CD8-positive, alpha-beta memory T cell (primary cell): ENCODE measurements at regions of chr14 and their contacts with region 1.

Region 1: DNA sequence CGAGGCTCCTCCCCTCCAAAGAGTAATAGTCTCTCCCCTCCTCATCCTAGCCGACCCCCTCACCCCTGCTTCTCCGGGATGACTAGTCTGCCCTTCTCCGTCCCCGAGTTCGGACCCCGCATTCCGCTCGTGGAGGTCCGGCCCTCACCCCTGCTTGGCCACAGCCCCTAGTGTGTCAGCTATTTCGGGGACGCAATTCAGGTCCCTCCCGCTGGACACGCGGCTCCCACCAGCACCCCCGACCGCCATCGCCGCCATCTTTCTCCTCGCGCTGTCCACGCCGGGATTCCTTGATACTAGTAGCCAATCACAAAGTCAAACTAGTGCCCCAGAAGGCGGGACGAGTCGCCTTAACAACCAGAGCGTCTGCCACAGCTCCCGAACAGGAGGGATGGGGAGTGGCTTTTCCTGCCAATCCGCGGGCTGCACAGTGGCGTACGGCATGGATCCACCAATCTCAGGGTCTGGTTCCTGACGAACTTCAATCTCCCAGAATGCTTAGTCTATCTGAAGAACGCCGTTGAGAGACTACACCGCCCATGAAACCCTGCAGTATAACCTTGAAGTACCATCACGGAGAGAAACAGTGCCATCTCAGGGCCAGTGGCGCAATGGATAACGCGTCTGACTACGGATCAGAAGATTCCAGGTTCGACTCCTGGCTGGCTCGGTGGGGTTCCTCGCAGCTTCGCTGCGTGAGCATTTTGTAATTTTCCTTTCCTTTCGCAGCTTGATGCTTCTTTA is at the start of gene PRMT5:
- DNase-seq: peak; percentile 95 to 99 (median 97)
- H3K4me3 ChIP-seq: peak within 1 kb of the TSS; percentile 92
- H3K4me3 Mint-ChIP-seq: no peak within 1 kb of the TSS
- H3K27ac ChIP-seq: peak within 1 kb of the TSS; percentile 87
- H3K27ac Mint-ChIP-seq: peak within 1 kb of the TSS in 1 of 8 donors; percentile 16
- H3K4me1 ChIP-seq: peaks cover 18% of the 10 kb centered on the region
- H3K4me1 Mint-ChIP-seq: peaks cover 8 to 21% (median 16%) of the 10 kb centered on the region in 3 donors
- H3K27me3 ChIP-seq: no peaks in the 10 kb centered on the region
- H3K27me3 Mint-ChIP-seq: no peaks in the 10 kb centered on the region
- total RNA-seq, gene PRMT5: 191 to 200 TPM

Region 2: DNA sequence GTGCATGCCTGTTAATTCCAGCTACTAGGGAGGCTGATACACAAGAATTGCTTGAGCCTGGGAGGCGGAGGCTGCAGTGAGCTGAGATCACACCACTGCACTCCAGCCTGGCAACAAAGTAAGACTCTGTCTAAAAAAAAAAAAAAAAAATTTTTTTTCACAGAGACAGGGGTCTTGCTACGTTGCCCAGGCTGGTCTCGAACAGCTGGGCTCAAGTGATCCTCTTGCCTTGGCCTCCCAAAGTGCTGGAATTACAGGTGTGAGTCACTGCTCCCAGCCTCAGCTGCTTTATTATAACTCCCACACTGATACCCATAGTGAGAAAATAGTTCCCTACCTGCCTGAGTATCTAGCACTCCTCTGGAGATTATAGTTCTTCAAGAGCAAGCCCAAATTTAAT is 16.4 kb after region 1 on chr14:
- CTCF ChIA-PET with region 1: interaction called, 20 read pairs
- POLR2A ChIA-PET with region 1: interaction called, 4 read pairs
- DNase-seq: no peak
- H3K4me3 ChIP-seq: no peak overlapping the region
- H3K4me3 Mint-ChIP-seq: no peak overlapping the region
- H3K27ac ChIP-seq: no peak overlapping the region
- H3K27ac Mint-ChIP-seq: no peak overlapping the region
- H3K4me1 ChIP-seq: no peaks in the 10 kb centered on the region
- H3K4me1 Mint-ChIP-seq: no peaks in the 10 kb centered on the region
- H3K27me3 ChIP-seq: no peaks in the 10 kb centered on the region
- H3K27me3 Mint-ChIP-seq: no peaks in the 10 kb centered on the region

Region 3: DNA sequence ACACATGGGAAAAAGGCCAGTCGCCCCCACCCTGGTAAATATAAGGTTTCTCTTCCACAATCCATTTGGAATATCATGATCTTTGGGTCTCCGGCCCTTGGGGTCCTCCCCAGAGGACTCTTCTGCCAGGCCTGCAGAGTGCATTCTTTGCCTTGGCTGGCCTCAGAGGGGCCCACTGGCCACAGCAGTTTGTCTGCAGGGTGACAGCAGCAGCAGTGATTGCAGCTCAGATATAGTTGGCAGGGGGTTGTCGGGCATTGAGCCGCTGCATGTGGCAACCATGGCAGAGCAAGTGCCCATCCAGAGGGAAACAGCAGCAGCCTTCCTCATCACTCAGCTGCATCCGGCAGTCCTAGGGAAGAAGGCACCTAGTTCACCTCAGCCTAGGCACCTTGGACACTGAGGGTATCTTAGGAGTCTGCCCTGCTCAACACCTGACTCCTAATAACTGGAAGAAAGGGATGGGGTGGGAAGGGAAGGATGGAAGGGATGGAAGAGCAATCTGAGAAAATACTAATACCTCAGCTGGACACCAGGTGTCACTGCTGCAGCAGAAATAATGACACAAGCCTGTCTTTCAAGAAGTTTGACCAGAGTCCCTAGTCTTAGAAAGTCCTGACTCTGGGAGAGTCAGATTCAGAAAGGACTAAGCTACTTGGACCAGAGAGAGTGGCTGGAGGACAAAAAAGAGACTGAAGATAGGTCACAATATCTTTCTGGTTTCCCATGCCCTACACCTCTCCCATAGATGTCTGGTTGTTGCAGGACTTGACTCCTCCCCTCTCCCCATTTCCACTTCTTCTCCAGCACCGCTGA is 44.1 kb after region 1 on chr14:
- CTCF ChIA-PET with region 1: interaction called, 14 read pairs
- POLR2A ChIA-PET with region 1: no interaction called
- DNase-seq: peak in 3 of 5 donors; percentile 27 to 53 (median 34)
- H3K4me3 ChIP-seq: no peak overlapping the region
- H3K4me3 Mint-ChIP-seq: peak overlapping the region in 1 of 7 donors; percentile 32
- H3K27ac ChIP-seq: no peak overlapping the region
- H3K27ac Mint-ChIP-seq: peak overlapping the region in 1 of 8 donors; percentile 31
- H3K4me1 ChIP-seq: no peaks in the 10 kb centered on the region
- H3K4me1 Mint-ChIP-seq: no peaks in the 10 kb centered on the region
- H3K27me3 ChIP-seq: peaks cover 4% of the 10 kb centered on the region
- H3K27me3 Mint-ChIP-seq: peaks cover 3 to 9% of the 10 kb centered on the region in 2 donors

Region 4: DNA sequence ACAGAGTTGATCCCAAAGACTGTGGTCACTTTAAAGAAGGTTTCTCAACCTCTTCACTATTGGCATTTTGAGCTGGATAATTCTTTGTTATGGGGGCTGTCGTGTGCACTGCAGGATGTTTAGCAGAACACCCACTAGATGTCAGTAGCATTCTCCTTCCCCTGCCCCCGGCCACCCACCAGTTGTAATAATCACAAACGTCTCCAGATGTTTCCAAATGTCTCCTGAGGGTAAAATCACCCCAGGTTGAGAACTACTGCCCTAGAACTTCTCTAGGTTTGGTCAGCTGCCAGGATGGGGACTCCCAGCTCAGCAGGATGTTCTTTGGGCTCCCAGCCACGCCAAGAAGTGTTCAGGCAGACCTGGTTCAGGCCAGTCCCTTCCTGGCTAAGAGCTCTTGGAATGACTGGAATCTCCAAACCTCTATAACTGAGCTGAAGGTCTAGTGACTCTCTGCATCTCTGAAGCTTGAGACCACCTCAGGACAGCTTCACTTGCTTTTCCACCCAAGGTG is 65.5 kb after region 1 on chr14:
- CTCF ChIA-PET with region 1: interaction called, 10 read pairs
- POLR2A ChIA-PET with region 1: no interaction called
- DNase-seq: peak in 2 of 5 donors; percentile 39 to 51
- H3K4me3 ChIP-seq: no peak overlapping the region
- H3K4me3 Mint-ChIP-seq: no peak overlapping the region
- H3K27ac ChIP-seq: no peak overlapping the region
- H3K27ac Mint-ChIP-seq: peak overlapping the region in 1 of 8 donors; percentile 19
- H3K4me1 ChIP-seq: no peaks in the 10 kb centered on the region
- H3K4me1 Mint-ChIP-seq: peaks cover 0 to 5% (median 0%) of the 10 kb centered on the region in 3 donors
- H3K27me3 ChIP-seq: no peaks in the 10 kb centered on the region
- H3K27me3 Mint-ChIP-seq: no peaks in the 10 kb centered on the region

Region 5: DNA sequence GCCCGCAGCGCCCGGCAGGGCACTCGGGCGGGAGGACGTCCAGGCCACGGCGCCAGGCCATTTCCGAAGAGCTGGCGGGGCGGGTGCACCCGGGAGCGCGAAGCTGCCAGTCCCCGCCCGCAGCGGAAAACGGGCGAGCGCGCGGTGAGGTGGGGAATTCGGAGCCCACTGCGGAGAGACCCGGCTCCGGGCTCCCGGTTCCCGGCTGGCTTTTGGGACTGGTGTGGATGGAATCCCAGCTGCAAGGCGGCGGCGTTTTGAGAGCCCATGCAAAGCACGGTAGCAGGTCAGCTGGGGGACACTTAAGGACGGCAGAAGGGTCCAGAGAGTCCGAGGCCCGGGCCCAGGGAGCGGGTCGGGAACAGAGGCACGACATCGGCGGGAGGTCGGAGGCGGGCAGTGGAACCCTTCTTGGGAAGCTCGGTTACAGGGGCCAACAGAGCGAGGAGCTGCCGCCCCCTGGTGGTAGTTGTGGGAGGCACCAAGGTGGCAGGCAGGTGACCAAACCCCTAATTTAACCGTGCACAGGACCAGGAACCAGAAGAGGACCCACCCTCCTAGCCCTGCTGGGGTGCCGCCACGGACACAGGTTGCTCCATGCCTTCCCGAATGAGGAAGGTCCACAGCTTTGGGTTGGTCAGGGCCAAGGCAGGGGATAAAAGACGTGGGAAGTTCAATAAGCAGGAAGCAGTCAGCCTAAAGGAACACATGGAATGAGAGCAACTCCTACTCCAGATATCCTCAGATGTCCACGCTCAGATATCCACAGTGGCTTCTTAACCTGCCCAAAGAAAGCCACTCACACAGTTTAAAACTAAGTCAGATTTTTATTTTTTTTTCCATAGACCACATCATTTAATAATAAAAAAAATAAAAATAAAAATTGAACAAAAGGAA is 128.7 kb after region 1 on chr14:
- CTCF ChIA-PET with region 1: interaction called, 13 read pairs
- POLR2A ChIA-PET with region 1: no interaction called
- DNase-seq: peak; percentile 74 to 90 (median 81)
- H3K4me3 ChIP-seq: peak overlapping the region; percentile 74
- H3K4me3 Mint-ChIP-seq: peak overlapping the region; percentile 85 to 95 (median 90)
- H3K27ac ChIP-seq: no peak overlapping the region
- H3K27ac Mint-ChIP-seq: peak overlapping the region in 7 of 8 donors; percentile 37 to 92 (median 66)
- H3K4me1 ChIP-seq: peaks cover 14% of the 10 kb centered on the region
- H3K4me1 Mint-ChIP-seq: peaks cover 16 to 19% (median 18%) of the 10 kb centered on the region in 3 donors
- H3K27me3 ChIP-seq: no peaks in the 10 kb centered on the region
- H3K27me3 Mint-ChIP-seq: no peaks in the 10 kb centered on the region

Region 6: DNA sequence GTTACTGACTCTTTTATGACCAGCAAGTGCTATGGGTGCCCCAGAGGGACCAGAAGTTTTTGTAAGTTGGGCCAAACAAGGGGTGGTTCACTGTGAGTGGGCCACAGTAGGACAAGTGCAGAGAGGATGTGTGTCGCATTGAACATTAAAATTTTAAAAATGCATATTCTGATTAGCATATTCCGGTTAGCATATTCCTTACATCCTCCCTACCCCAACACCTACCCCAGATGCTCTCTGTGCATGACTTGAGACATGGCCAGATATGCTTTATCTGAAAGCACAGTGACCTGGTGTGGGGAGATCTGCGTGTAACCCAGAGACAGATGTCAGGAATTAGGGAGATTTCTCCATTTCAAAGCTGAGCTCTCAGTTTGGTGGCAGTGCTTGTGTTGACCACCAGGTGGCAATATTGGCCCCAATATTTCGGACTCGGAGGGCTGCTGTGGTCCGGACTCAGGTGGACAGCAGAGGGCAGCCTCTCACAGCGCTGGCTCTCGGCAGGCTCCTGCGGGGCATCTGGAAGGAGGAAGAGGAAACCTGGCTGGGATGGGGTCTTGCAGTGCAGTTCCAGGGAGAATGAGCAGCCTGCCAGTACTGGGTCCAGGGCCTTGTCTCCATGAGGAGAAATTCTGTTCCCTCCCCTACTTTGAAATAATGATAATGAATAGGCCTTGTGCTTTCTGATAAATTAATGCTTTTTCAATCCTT is 191.4 kb after region 1 on chr14:
- CTCF ChIA-PET with region 1: no interaction called
- POLR2A ChIA-PET with region 1: no interaction called
- DNase-seq: peak; percentile 58 to 85 (median 76)
- H3K4me3 ChIP-seq: peak overlapping the region; percentile 59
- H3K4me3 Mint-ChIP-seq: peak overlapping the region in 6 of 7 donors; percentile 38 to 77 (median 65)
- H3K27ac ChIP-seq: peak overlapping the region; percentile 10
- H3K27ac Mint-ChIP-seq: peak overlapping the region; percentile 77 to 96 (median 80)
- H3K4me1 ChIP-seq: peaks cover 53% of the 10 kb centered on the region
- H3K4me1 Mint-ChIP-seq: peaks cover 28 to 42% (median 28%) of the 10 kb centered on the region in 3 donors
- H3K27me3 ChIP-seq: no peaks in the 10 kb centered on the region
- H3K27me3 Mint-ChIP-seq: peaks cover 3 to 5% of the 10 kb centered on the region in 2 donors